PC-3 (cell line): ENCODE measurements at regions of chr11 and their contacts with region 1.

Region 1: DNA sequence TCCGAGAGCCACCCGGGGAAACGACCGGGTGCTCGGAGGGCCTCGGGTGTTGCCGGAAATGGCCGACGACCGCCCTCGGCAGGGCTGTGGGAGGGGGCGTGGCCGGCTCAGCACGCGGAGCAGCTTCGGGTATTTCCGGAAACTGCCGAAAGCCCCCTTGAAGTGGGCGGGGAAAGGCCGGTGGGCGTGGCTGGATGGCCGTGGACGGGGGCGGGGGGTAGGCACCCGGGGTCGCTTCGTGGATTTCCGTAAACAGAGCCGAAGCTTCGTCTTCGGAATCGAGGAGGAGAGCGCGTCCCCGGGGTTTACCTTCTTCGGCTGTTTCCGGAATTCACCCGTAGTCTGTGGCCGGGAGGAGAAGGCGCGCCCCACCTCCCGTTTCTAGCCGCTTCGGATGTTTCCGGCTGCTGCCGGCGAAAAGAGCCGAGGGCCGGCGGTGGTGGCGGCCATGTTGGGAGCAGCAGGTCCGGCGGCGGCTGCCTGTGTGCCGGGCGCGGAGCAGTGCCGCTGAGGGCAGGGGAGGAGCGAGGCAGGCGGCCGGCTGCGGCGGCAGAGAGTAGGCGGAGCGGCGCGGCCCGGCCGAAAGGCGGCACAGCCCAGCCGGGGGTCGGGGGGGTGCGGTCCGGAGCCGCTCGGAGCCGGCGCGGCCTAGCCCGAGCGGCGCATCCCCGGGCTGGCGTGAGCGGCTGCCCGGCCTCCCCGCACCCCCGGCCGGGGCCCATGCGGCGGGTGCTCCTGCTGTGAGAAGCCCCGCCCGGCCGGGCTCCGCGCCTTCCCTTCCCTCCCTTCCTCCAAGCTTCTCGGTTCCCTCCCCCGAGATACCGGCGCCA is at the start of gene MARK2:
- DNase-seq: peak; percentile 99
- ATAC-seq: peak; percentile 80
- H3K4me3 ChIP-seq: peak within 1 kb of the TSS; percentile 75
- H3K27ac ChIP-seq: peak within 1 kb of the TSS; percentile 21
- H3K4me1 ChIP-seq: peaks cover 42% of the 10 kb centered on the region
- H3K27me3 ChIP-seq: no peaks in the 10 kb centered on the region
- CTCF ChIP-seq: no peak
- total RNA-seq, gene MARK2: 60.1 and 66.5 TPM in 2 replicates

Region 2: DNA sequence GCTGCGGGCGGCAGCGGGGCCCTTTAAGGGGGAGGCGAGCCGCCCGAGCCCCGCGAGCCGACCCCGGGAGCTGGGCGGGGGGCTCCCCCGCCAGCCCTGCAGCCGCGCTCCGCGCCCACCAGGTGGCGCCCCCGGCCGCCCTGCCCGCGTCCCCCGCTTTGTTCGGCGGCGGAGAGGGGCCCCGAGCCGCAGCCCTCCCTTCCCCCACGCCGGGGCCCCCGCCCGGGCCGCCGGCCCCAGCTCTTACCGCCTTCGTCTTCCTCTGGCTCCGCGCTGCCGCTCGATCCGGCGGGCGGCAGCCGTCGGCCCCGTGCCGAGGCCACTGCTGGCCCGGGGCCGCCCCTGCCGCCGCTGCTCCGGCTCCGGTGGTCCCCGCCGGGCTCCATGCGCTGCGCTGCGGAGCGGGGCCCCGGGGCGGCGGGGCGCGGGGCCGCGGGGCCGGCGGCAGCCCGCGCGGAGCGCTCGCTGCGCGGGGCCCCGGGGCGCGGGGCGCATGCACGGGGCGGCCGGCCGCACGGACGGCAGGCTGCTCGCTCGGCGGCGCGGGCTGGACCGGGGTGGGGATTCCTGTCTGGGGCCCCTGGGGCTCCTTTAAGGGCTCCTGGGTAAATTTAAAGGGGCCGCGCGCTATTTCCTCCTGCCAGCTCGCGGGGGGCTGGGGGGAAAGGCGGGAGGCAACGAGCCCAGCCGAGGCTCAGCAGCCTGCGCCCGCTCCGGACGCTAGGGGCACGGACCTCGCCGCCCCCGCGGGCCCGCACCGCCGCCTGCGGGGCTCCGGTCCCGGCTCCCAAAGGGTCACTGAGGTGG is 70.5 kb before region 1 on chr11 and contains the start of gene ZFTA:
- CTCF ChIA-PET with region 1: interaction called, 3 read pairs
- POLR2A ChIA-PET with region 1: no interaction called
- intact Hi-C with region 1: loop called (anchors 2 kb)
- DNase-seq: peak; percentile 64
- ATAC-seq: peak; percentile 59
- H3K4me3 ChIP-seq: peak within 1 kb of the TSS; percentile 100
- H3K27ac ChIP-seq: no peak within 1 kb of the TSS
- H3K4me1 ChIP-seq: peaks cover 9% of the 10 kb centered on the region; the same call in 1 of the 2 replicates
- H3K27me3 ChIP-seq: no peaks in the 10 kb centered on the region
- CTCF ChIP-seq: peak; percentile 45
- total RNA-seq, gene ZFTA: 15.1 and 29.5 TPM in 2 replicates

Region 3: DNA sequence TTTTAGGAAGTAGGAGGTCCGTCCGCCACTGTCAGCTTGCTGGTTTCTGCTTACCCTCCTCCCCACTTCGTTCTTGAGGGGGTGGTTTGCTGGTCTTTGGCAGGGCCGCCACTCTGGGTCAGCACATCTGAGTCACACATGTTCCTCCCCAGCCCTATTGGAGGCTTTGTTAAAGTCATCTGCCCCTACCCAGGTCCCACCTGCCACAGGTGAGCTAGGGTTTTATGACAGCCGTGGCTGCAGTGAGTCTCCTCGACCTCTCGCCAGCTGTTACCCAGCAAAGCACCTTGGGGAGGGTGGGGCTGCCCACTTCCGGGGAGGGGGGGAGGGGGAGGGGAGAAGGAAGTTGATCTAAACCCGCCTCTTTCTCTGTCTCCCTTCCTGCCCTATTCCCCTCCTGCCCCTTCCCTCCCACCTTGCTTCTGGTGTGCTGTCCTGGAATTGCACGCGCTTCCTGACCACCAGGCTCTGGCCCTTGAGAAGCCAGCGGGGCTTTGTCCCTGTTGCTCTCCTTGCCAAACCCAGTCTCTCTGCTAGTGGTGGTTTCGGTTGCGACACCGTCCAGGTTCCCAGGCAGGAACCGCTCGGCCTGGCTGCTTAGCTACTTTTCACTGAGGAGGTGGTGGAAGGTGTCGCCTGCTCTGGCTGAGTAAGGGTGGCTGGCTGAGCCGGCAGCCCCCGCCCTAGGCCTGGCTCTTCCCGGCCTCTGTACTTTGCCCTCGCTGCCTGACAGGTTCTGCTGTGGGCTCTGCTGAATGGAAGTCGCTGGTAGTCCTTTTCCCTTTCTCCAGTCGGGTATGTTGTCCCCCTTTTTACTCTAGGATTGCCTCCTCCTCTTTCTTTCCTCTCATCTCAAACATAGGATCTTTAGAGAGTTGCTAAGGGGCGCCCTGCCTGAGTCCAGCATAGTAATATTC is 49.5 kb after region 1 on chr11:
- CTCF ChIA-PET with region 1: no interaction called
- POLR2A ChIA-PET with region 1: no interaction called
- intact Hi-C with region 1: loop called (anchors 1 kb)
- DNase-seq: peak; percentile 86
- ATAC-seq: peak; percentile 71
- H3K4me3 ChIP-seq: peak overlapping the region; percentile 64
- H3K27ac ChIP-seq: peak overlapping the region; percentile 88
- H3K4me1 ChIP-seq: peaks cover 28% of the 10 kb centered on the region
- H3K27me3 ChIP-seq: no peaks in the 10 kb centered on the region
- CTCF ChIP-seq: no peak

Region 4: DNA sequence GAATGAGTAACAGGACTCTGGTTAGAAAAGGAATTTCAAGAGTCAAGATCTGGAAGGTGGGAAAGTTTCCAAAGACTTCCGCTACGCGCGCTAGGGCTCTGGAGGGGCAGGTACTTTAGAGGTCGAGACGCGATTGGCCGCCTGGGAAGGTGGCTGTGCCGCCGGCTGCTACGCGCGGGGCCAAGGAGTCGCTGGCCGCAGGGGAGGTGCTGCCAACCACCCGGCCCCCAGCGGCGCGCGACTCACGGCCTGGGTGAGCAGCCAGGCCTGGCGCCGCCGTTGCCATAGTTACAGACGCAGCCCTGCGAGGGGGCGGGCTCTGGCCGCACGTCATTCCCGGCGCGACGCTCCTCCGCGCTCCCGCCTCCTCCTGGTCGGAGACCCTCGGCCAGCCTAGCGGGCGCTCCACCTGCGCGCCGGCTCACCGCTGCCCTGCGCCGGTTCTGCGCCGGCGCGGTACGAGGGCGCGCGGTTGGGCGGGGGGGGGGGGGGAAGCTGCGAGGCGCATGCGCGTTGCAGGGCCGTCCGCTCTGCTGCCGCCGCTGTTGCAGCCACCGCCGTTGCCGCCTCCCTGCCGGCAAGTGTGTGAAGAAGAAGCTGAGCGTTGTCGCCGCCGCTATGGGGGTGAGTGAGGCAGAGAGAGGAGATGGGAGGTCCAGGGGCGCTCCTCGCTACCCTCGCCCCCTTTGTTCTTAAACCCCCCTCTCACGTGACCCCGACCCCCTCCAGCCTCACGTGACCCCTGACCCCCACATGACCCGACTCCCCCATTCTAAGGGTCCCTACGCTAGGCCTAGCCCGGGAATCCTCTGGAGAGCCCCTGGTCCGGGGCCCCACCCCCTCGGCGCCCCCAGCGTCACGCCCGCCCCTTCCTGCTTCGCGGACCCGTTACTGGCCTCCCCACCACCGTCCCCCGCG is 99.8 kb after region 1 on chr11 and contains the start of gene NAA40:
- CTCF ChIA-PET with region 1: interaction called, 8 read pairs
- POLR2A ChIA-PET with region 1: interaction called, 4 read pairs
- intact Hi-C with region 1: loop called (anchors 2 kb)
- DNase-seq: peak; percentile 99
- ATAC-seq: peak; percentile 95
- H3K4me3 ChIP-seq: peak within 1 kb of the TSS; percentile 95
- H3K27ac ChIP-seq: peak within 1 kb of the TSS; percentile 8
- H3K4me1 ChIP-seq: peaks cover 14% of the 10 kb centered on the region
- H3K27me3 ChIP-seq: no peaks in the 10 kb centered on the region
- CTCF ChIP-seq: no peak
- total RNA-seq, gene NAA40: 20.9 and 26.7 TPM in 2 replicates

Region 5: GRCh38 chr11:64152841-64153691 is 314.2 kb after region 1 on chr11:
- CTCF ChIA-PET with region 1: no interaction called
- POLR2A ChIA-PET with region 1: no interaction called
- intact Hi-C with region 1: loop called (anchors 5 kb)
- DNase-seq: peak; percentile 76
- ATAC-seq: peak; percentile 96
- H3K4me3 ChIP-seq: peak overlapping the region; percentile 36; the same call in 1 of the 2 replicates
- H3K27ac ChIP-seq: no peak overlapping the region
- H3K4me1 ChIP-seq: no peaks in the 10 kb centered on the region
- H3K27me3 ChIP-seq: no peaks in the 10 kb centered on the region
- CTCF ChIP-seq: peak; percentile 99